Activated T-helper 2 cell treated with anti-CD3 and anti-CD28 coated beads, Interferon-gamma antibody, Interleukin-2, Interleukin-4, amounts not matched to agents 10 μg/mL and 5 μg/mL and 100 μg/mL, durations not matched to agents 14 hours and 24 hours and 36 hours (primary cell): ENCODE measurements at regions of chr1 and their contacts with region 1.

Region 1: DNA sequence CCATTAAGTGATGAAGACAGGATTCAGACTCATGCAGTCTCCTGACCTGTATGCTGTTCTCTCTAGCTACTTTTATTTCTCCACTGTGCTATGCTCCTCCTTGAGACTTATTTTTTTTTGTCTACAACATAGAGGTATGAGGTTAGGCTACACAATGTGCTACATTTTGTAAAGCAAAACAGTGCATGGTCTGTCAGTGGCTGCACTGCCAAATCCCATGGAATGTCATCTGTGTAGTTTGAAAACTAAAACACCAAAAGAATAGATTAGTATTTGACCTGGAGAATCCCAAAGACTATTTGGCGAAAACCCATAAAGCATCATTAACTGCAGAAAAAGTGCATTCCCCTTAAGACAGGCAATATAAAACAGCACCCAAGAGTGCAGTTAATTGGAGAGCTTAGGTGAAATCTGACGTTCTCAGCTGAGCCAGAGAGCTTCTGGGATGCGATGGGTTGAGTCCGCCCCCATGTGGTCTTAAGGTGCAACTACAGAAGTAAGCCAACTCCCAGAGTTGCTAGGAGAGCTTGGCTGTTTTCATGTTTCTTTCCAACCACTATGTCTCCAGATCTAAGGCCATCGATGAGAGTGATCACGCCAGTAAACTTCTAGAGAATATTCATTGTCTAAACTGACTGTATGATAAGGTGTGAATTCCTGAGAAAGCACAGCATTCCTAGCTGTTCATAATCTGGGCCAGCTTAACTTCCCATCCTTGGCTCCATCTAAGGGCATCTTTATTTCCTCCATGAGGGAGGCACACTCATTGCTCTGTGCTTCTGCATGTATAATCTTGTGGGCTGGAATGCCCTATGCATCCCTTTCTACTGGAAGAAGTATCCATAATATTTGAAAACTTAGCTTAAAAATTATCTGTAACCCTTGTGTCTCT is 20.7 kb upstream of the CYP2J2 start:
- DNase-seq: peak; percentile 28
- H3K4me3 Mint-ChIP-seq: no peak overlapping the region
- H3K27ac Mint-ChIP-seq: no peak overlapping the region
- H3K4me1 Mint-ChIP-seq: no peaks in the 10 kb centered on the region
- H3K27me3 Mint-ChIP-seq: peaks cover 3% of the 10 kb centered on the region

Region 2: DNA sequence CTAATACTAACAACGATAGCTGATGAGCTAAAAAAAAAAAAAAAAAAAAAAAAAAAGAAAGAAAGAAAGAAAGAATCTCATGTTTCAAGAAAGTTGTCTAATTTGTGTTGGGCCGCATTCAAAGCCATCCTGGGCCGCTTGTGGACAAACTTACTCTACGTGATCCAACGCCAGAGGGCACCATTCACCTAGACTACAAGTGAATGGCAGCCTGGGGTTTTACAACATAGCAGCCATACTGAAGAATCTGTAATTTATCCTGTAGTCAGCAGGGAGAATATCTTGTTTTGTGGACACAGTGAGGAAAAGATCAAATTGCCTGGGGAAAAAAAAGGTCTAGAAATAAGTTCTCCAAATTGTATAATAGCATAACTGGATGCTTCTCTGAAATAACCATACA is 67.7 kb before region 1 on chr1:
- intact Hi-C with region 1: loop called (anchors 1 kb)
- DNase-seq: peak; percentile 15
- H3K4me3 Mint-ChIP-seq: no peak overlapping the region
- H3K27ac Mint-ChIP-seq: no peak overlapping the region
- H3K4me1 Mint-ChIP-seq: no peaks in the 10 kb centered on the region
- H3K27me3 Mint-ChIP-seq: peaks cover 7% of the 10 kb centered on the region

Region 3: DNA sequence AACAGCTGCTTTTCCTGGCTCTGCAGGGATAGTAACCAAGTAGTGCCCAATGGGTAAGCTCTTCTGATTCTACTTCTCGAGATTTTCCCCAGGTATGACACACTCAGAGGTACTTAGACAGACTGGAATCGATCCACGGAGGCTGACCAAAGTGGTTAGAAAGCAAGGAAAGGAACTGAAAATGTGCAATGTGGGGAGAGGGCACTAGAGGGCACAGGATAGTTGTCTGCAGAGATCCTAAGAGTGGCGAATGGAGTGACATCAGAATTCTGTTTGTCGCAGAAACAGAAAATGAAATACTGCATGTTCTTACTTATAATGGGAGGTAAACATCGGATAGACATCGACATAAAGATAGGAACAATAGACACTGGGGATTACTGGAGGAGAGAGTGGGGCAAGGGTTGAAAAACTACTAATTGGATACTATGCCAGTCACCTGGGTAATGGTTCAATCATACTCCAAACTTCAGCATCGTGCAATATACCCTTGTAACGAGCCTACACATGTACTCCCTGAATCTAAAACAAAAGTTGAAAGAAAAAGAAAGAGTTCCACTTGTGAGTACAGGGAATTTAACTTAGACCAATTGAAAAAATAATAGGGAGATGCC is 44.0 kb before region 1 on chr1:
- intact Hi-C with region 1: loop called (anchors 1 kb)
- DNase-seq: no peak
- H3K4me3 Mint-ChIP-seq: no peak overlapping the region
- H3K27ac Mint-ChIP-seq: no peak overlapping the region
- H3K4me1 Mint-ChIP-seq: no peaks in the 10 kb centered on the region
- H3K27me3 Mint-ChIP-seq: no peaks in the 10 kb centered on the region